HepG2 (cell line): ENCODE measurements at regions of chr4 and their contacts with region 1.

Region 1: DNA sequence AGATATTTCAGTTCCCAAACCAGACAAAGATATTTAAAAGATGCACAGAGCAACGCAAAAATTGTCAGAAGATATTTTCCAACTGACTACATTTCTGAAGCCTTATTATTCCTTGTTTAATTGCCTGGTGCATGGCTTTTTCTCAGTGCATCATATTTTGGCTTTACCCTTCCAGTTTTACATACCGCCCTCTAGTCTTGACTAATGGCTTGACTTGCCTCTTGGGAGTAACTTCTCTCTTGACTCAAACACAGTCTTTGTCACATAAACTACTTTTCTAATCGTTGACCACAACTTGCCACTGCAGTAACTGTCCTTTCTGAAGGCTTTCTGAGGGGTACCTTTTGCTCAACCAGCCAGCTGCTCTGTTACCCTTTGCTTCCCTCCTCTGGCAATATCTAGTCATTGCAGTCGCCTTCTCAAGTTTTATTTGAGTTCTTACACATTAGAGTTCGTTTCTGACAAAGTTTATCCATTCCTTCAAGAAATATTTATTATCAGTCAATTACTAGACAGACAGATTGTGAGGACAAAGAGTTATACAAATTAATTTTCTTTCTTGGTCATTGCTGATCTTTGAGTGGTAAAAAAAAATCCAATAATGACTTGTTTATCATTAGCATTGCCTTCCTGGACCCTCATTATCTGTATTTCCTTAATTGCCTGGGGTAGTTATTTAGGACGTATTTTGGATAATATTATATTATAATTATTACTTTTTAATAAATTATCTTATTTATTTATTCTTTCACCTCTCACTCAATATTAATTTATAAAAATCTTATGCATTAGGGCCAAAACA is 506.9 kb upstream of the PCDH10 start:
- DNase-seq: peak; percentile 20
- ATAC-seq: peak; percentile 69
- H3K4me3 ChIP-seq: no peak overlapping the region
- H3K27ac ChIP-seq: no peak overlapping the region
- H3K4me1 ChIP-seq: no peaks in the 10 kb centered on the region
- H3K27me3 ChIP-seq: no peaks in the 10 kb centered on the region
- CTCF ChIP-seq: peak; percentile 72
- EP300 ChIP-seq: no peak
- POLR2A ChIP-seq: no peak
- RAD21 ChIP-seq: no peak

Region 2: DNA sequence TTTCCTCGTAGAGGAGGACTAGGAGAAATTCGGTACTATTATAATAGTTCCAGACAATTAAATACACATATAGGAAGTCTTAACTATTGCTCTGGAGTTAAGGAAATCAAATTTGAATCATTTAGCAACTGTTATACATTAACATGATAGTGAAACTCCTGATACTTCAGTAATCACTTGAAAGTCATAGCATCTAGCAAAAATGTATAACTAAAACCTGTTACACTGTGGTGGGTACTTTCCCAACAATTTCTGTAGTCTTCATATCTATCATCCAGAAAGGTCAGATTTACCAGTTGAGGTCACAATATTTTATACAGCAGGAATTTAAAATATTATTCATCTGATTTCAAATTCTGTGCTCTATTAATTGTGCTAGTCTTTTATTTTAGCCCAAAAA is 162.7 kb before region 1 on chr4:
- CTCF ChIA-PET with region 1: no interaction called
- POLR2A ChIA-PET with region 1: no interaction called
- in situ Hi-C with region 1: no loop called
- intact Hi-C with region 1: loop called (anchors 1 kb)
- DNase-seq: no peak
- ATAC-seq: no peak
- H3K4me3 ChIP-seq: no peak overlapping the region
- H3K27ac ChIP-seq: no peak overlapping the region
- H3K4me1 ChIP-seq: no peaks in the 10 kb centered on the region
- H3K27me3 ChIP-seq: no peaks in the 10 kb centered on the region
- CTCF ChIP-seq: no peak
- EP300 ChIP-seq: no peak
- POLR2A ChIP-seq: no peak
- RAD21 ChIP-seq: no peak

Region 3: DNA sequence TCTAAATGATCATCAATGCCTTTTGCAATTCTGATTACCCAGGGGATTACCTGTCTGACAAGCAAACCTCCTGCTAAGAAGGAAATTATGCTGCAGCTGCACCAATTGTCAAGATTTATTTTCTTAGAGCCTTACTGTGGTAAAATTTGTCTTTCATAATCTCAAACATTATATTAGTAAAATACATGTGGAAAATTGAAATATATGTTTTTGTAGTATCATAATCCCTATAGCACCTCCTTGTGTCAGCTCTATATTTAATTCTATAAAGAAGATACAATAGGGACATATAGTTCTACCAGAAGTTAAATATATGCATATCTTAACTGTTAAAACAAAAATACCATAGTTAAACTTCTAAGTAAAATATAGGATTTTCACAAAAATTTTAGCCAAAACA is 148.7 kb before region 1 on chr4:
- CTCF ChIA-PET with region 1: no interaction called
- POLR2A ChIA-PET with region 1: no interaction called
- in situ Hi-C with region 1: no loop called
- intact Hi-C with region 1: no loop called
- DNase-seq: no peak
- ATAC-seq: no peak
- H3K4me3 ChIP-seq: no peak overlapping the region
- H3K27ac ChIP-seq: no peak overlapping the region
- H3K4me1 ChIP-seq: no peaks in the 10 kb centered on the region
- H3K27me3 ChIP-seq: no peaks in the 10 kb centered on the region
- CTCF ChIP-seq: no peak
- EP300 ChIP-seq: no peak
- POLR2A ChIP-seq: no peak
- RAD21 ChIP-seq: no peak

Region 4: GRCh38 chr4:132614682-132615081 is 27.5 kb before region 1 on chr4:
- CTCF ChIA-PET with region 1: no interaction called
- POLR2A ChIA-PET with region 1: no interaction called
- in situ Hi-C with region 1: no loop called
- intact Hi-C with region 1: no loop called
- DNase-seq: no peak
- ATAC-seq: no peak
- H3K4me3 ChIP-seq: no peak overlapping the region
- H3K27ac ChIP-seq: no peak overlapping the region
- H3K4me1 ChIP-seq: no peaks in the 10 kb centered on the region
- H3K27me3 ChIP-seq: no peaks in the 10 kb centered on the region
- CTCF ChIP-seq: no peak
- EP300 ChIP-seq: no peak
- POLR2A ChIP-seq: no peak
- RAD21 ChIP-seq: no peak

Region 5: GRCh38 chr4:133694416-133694815 is 1052.2 kb after region 1 on chr4:
- CTCF ChIA-PET with region 1: no interaction called
- POLR2A ChIA-PET with region 1: no interaction called
- in situ Hi-C with region 1: no loop called
- intact Hi-C with region 1: no loop called
- DNase-seq: no peak
- ATAC-seq: no peak
- H3K4me3 ChIP-seq: no peak overlapping the region
- H3K27ac ChIP-seq: no peak overlapping the region
- H3K4me1 ChIP-seq: no peaks in the 10 kb centered on the region
- H3K27me3 ChIP-seq: no peaks in the 10 kb centered on the region
- CTCF ChIP-seq: no peak
- EP300 ChIP-seq: no peak
- POLR2A ChIP-seq: no peak
- RAD21 ChIP-seq: no peak